Right cardiac atrium (tissue), 5 donors: ENCODE measurements at regions of chr18 and their contacts with region 1.

Region 1: DNA sequence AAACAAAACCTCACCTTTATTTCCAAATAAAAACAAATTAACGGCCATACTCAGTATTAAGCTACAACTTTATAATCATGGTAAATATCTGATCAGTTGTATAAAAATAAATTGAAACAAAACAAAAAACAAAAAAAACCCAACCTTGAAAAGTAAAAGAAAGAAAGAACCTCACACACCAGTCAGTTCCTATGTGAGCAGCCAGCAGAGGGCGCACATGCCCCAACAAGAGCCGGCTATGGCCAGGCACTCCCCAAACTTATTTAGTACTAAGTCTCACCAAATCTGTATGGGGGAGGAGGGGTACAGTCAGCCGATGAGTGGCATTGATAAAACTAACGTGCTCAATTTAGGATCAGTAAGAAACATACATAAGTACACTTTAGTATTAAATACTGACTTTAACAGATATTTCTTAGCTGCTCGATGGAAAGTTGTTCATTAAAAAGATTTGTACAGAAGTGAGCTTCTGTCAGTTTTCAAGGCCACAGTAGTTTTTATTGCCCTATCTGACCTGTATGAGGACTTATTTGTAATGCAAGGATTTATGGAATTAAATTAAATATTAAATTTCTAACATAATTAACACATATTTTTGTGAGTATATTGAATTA is 172.6 kb downstream of the TCF4 start:
- DNase-seq: peak; percentile 90 to 97 (median 94)
- ATAC-seq: peak; percentile 91 to 92
- H3K4me3 ChIP-seq: no peak overlapping the region
- H3K27ac ChIP-seq: no peak overlapping the region
- H3K4me1 ChIP-seq: peaks cover 3% of the 10 kb centered on the region
- H3K27me3 ChIP-seq: no peaks in the 10 kb centered on the region

Region 2: GRCh38 chr18:55199291-55199963 is 215.9 kb before region 1 on chr18:
- intact Hi-C with region 1: no loop called
- DNase-seq: no peak
- ATAC-seq: no peak
- H3K4me3 ChIP-seq: no peak overlapping the region
- H3K27ac ChIP-seq: no peak overlapping the region
- H3K4me1 ChIP-seq: peaks cover 3% of the 10 kb centered on the region
- H3K27me3 ChIP-seq: no peaks in the 10 kb centered on the region

Region 3: GRCh38 chr18:55509631-55510324 is 94.4 kb after region 1 on chr18:
- intact Hi-C with region 1: loop called in 1 of 4 experiments (anchors 10 kb)
- DNase-seq: no peak
- ATAC-seq: peak; percentile 53 to 69
- H3K4me3 ChIP-seq: peak overlapping the region; percentile 52
- H3K27ac ChIP-seq: peak overlapping the region; percentile 90
- H3K4me1 ChIP-seq: peaks cover 2% of the 10 kb centered on the region
- H3K27me3 ChIP-seq: no peaks in the 10 kb centered on the region

Region 4: DNA sequence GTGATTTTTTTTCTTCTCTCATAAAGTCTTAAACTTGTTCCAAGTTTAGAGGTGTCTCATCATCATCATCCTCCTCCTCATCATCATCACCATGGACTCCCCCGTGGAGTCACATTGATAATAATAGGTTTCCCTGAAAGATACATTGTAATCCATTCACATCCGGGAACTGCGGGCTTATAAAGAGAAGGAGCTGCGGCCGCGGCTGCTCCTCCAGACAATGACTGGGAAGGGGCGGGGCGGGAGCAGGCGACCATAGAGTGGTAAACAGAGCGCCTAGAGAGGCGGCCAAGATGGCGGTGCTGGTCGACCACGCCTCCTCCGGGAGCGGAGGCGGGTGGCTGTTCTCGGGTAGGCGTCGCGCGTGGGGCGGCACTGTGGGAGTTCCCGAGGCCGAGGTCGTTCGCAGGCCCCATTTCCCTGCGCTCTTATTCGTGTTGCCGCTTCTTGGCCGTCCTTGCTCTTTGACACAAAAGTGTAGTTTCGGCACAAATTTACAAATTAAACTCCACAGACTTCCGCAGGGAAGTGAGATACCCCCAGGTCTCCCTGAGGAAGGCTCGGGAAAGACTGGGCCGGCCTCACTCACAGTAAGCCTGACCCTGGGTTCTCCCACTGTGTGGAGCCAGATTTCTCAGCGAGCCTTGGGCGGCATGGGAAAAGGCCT is 174.4 kb after region 1 on chr18:
- intact Hi-C with region 1: loop called (anchors 5 to 10 kb)
- DNase-seq: peak; percentile 98 to 99 (median 99)
- ATAC-seq: peak; percentile 97 to 98
- H3K4me3 ChIP-seq: peak overlapping the region; percentile 100
- H3K27ac ChIP-seq: peak overlapping the region; percentile 71
- H3K4me1 ChIP-seq: peaks cover 2% of the 10 kb centered on the region
- H3K27me3 ChIP-seq: no peaks in the 10 kb centered on the region

Region 5: DNA sequence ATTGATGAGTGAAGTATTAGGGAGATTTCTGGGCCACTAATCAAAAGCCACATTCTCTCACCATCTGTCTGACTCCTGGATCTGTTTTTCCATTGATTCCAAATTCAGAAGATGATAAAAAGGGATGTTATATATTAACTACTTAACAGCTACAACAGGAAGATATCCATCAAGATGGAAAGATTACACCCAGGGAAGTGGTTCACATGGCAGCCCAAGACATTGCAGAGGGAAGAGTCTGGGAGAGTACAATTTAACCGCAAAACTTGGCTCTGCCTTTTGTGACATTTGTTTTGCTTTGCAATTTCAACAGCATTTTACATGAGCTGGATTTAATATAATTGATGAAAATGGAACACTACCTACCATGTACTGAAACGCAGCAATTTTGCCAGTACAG is 195.1 kb after region 1 on chr18:
- intact Hi-C with region 1: no loop called
- DNase-seq: no peak
- ATAC-seq: no peak
- H3K4me3 ChIP-seq: no peak overlapping the region
- H3K27ac ChIP-seq: no peak overlapping the region
- H3K4me1 ChIP-seq: no peaks in the 10 kb centered on the region
- H3K27me3 ChIP-seq: no peaks in the 10 kb centered on the region

Region 6: GRCh38 chr18:55781481-55781957 is 366.2 kb after region 1 on chr18:
- intact Hi-C with region 1: loop called in 3 of 4 experiments (anchors 5 to 10 kb)
- DNase-seq: peak; percentile 41 to 77 (median 61)
- ATAC-seq: peak; percentile 69 to 81
- H3K4me3 ChIP-seq: no peak overlapping the region
- H3K27ac ChIP-seq: peak overlapping the region; percentile 54
- H3K4me1 ChIP-seq: peaks cover 1% of the 10 kb centered on the region
- H3K27me3 ChIP-seq: no peaks in the 10 kb centered on the region

Region 7: GRCh38 chr18:55869556-55870501 is 454.5 kb after region 1 on chr18:
- intact Hi-C with region 1: loop called in 1 of 4 experiments (anchors 5 kb)
- DNase-seq: peak; percentile 20 to 70 (median 27)
- ATAC-seq: peak; percentile 52 to 65
- H3K4me3 ChIP-seq: no peak overlapping the region
- H3K27ac ChIP-seq: no peak overlapping the region
- H3K4me1 ChIP-seq: no peaks in the 10 kb centered on the region
- H3K27me3 ChIP-seq: no peaks in the 10 kb centered on the region

Region 8: DNA sequence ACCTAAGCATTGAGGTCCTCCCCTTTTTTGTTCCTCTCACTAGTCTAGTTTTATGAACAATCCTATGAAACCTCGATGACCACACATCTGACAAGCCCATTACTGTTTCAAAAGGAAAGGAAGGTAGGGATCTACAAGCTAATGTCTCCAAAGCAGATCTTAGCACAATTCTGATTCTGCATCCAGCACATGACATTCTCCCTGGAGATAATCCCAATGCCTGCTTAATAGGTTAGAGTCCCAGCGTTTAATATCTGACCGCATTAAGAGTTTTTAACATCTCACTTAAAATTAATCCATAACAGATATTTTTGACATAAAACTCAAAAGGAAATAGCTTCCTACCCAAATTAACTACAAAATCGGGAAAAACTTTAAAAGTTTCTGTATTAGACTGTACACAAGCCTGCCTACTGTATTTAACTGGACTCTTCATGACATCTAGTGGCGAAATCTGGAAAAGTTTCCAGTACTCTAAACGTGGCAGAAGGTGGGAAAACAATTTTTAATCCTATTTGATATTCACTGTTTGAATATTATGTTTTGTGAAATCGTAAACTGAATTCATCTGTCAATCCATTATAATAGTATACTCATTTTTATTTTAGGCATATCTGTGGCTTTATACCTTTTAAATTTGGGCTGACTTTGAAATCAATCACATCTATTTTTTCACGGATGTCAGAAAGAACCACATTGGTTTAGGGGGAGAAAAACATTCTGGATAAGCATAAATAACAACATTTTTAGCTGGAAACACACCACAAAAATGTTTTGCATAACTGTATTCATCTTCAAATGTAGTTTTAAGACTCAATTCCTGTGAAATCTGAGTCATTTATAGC is 1160.7 kb after region 1 on chr18:
- intact Hi-C with region 1: loop called in 3 of 4 experiments (anchors 5 to 10 kb)
- DNase-seq: no peak
- ATAC-seq: peak; percentile 88 to 89
- H3K4me3 ChIP-seq: peak overlapping the region; percentile 15
- H3K27ac ChIP-seq: no peak overlapping the region
- H3K4me1 ChIP-seq: peaks cover 5% of the 10 kb centered on the region
- H3K27me3 ChIP-seq: no peaks in the 10 kb centered on the region